KBM-7 (cell line): ENCODE measurements at regions of chr17 and their contacts with region 1.

Region 1: DNA sequence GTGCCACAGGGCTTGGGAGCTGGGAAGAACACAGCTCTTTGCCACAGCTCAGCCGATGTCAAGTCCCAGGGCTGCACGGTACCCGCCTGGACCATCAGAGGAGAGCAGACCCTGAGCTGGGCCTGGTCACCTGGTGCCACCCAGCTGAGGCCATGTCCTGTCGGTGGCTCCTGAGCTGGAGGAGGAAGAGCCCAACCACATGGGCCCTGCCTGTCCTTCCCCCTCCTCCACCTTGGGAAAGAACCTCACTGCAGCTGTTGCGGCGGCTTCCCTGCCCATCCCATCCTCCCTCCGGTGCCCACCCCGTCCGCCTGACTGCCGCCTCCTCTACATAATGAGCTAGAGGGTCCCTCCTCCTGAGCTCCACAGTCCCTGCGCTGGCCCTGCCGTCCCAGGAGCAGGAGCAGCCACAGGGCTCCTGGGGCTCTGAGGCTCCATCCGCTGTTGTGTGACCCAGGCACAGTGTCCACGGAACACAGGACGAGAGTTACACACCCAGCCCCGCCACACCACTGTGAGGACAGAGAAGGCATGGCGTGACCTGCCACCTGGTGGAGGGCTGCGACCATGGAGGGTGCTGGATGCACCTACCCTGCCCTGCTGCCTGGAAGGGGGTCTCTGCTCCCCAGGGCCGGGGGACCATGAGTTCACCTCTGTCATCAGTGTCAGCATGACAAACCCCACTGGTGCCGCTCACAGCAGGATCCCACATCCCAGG is 21.4 kb upstream of the CHMP6 start:
- DNase-seq: peak; percentile 37

Region 2: DNA sequence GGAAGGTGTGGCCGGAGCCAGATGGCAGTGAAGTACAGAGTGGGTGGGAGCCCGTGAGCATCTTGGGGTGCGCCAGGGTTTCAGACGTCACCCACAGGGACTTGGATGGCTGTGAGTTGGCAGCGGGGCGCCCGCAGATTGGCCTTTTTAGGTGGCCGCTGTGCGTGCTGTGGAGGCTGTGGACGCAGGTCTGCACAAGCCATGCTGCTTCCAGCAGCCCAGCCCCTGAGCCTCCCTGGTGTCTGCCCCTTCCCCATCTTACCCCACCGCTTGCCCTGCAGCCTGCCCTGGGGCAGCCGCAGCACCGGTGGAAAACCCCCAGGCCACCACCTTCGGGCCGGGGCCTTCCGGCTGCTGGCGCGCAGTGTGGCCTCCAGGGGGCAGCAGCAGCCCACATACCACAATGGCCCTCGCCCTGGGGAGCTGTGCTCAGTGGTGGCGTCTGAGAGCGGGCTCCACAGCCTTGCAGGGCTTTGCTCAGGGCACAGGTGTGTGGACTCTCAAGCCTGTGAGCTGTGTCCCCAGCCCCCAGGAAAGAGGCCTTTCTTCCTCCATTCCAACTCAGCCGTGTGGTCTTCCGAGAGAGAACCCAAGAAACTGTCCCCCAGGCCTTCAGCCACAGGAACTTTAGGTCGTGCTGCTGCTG is 543.4 kb before region 1 on chr17:
- in situ Hi-C with region 1: loop called (anchors 10 kb)
- DNase-seq: peak; percentile 76

Region 3: GRCh38 chr17:81165246-81166032 is 195.2 kb after region 1 on chr17 and contains the start of gene PVALEF:
- in situ Hi-C with region 1: no loop called
- DNase-seq: peak; percentile 25